GM10248 (cell line): ENCODE measurements at regions of chr9 and their contacts with region 1.

Region 1: DNA sequence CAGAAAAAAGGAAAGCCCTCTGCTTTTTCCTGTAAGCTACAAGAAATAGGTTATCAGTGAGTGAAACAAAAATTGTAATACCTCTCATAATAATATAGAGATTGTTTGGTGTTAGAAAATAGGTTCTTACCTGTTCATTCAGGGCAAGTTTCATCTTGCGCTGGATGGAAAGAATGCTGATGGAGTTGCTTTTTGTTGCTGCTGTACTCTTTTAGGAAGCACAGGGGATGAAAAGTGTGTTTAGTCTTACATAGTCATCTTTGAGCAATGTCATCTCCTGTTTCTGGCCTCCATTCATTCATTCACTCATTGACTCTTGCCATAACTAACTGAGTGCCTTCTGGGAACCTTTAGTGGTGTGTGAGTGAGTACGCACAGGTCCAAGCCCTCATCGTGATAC is 6.4 kb downstream of the ENTREP1 start:
- DNase-seq: no peak
- CTCF ChIP-seq: no peak

Region 2: GRCh38 chr9:69319324-69320045 is 12.0 kb before region 1 on chr9:
- CTCF ChIA-PET with region 1: interaction called, 10 read pairs
- POLR2A ChIA-PET with region 1: no interaction called
- DNase-seq: no peak
- CTCF ChIP-seq: no peak

Region 3: GRCh38 chr9:69346998-69347397 is 15.6 kb after region 1 on chr9:
- CTCF ChIA-PET with region 1: interaction called, 13 read pairs
- POLR2A ChIA-PET with region 1: no interaction called
- DNase-seq: no peak
- CTCF ChIP-seq: no peak

Region 4: GRCh38 chr9:69376651-69377050 is 45.2 kb after region 1 on chr9:
- CTCF ChIA-PET with region 1: no interaction called
- POLR2A ChIA-PET with region 1: no interaction called
- DNase-seq: no peak
- CTCF ChIP-seq: no peak